ENCODE measurements at regions of chr3 and their contacts with region 1.

Region 1: GRCh38 chr3:163056874-163057497 is 1560.4 kb downstream of the OTOL1 start:
- DNase-seq: peak; percentile 73
- H3K4me3 Mint-ChIP-seq: no peak overlapping the region
- H3K27ac Mint-ChIP-seq: no peak overlapping the region
- H3K4me1 Mint-ChIP-seq: no peaks in the 10 kb centered on the region
- H3K27me3 Mint-ChIP-seq: no peaks in the 10 kb centered on the region

Region 2: DNA sequence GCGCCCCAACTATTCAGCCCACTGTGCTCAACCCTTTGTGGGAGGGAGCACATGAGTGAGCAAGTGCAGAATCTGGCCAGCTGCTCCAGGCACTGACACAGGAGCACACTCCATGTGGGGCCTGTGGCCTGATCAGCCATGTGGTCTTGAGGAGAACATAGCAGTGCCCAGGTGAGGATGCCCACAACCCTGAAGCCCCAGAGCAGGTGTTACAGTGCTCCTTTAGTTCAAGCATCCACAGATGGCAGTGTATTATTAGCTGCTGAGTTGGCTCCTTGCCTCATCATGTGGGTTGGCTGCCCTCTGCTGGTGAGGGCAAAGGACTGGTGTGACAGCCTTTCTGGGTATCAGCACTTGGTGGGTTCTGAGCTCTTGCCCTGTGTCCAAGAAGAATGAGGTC is 433.1 kb after region 1 on chr3:
- intact Hi-C with region 1: loop called (anchors 10 kb)
- DNase-seq: peak; percentile 67
- H3K4me3 Mint-ChIP-seq: no peak overlapping the region
- H3K27ac Mint-ChIP-seq: no peak overlapping the region
- H3K4me1 Mint-ChIP-seq: no peaks in the 10 kb centered on the region
- H3K27me3 Mint-ChIP-seq: no peaks in the 10 kb centered on the region